ENCODE measurements at regions of chr10 and their contacts with region 1.

Region 1: DNA sequence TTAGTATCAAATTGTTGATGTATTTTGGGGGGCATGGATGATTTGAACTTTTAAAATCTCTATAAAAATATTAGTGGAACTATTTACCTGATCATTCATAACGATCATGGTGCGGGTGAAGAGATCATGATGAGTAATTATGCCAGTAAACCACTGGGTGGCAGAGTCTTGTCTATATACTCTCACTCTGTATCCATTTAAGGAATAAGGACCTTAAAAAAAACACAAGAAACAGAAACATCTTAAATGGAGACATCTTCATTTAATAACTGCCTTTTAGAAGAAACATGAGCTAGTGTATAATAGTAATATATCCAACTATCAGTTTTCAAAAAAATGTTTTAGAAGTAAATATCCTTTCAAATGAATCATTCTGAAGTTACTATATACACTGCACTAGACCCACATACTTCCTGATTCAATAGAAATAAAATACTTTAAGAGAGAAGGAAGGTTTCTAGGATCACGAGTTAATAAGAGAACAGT is 84.0 kb downstream of the NRBF2 start:
- DNase-seq: no peak
- ATAC-seq: peak; percentile 78 to 84

Region 2: DNA sequence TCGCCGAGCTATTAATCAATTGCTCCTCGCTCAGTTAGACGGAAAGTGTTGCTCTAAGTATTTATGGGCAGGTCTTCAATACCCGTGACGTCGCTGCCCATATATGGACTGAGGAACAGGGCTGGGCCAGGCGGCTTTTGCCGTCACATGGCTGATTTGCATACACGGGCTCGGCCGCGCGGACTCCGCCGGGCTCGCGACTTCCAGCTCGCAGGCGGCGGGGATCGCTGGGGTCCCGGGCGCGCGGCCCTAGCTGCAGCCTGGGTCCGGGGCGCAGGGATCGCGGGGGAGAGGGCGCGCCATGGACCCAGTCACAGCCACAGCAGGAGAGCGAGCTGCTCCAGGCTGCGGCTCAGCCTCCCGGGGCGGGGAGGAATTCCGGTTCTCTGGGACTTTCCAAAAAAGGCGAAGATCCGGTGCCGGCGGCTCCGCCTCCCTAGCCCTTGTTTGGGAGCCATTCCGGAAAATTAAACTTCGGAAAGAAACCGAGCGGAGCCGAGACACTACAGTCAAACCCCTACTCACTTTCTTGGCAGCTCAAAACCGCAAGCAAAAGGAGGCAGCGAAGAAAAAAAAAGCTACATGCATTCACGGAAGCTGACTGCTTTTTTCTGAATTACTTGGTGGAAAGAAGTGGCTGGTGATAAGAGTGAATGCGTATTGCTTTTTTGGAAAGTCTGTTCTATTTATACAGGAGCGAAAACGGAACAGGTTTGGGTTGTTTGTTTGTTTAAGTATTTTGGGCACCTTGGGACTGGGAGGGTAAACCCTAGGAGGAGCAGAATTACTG is 400.6 kb before region 1 on chr10 and contains the start of gene EGR2:
- intact Hi-C with region 1: no loop called
- DNase-seq: peak; percentile 95
- ATAC-seq: peak; percentile 87 to 88
- total RNA-seq, gene EGR2: 2.3 to 4.4 TPM

Region 3: DNA sequence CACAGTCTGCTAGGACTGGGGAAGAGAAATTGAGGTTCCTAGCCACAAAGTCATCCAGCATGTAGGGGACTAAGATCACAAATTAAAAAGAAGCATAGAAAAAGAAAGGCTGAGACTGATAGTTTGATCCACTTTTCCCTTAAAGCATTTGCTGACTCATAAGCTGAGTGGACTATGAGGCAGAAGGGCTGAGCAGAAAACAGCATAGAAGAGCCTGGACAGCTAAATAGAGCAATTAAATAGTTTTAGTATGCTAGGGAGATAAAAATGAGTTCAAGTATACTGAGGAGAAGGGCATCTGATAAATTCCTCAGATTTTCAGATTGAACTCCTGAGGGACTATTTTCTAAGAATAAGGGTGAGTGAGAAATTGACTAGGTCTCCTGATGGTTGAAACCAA is 245.1 kb before region 1 on chr10:
- intact Hi-C with region 1: no loop called
- DNase-seq: no peak
- ATAC-seq: no peak

Region 4: DNA sequence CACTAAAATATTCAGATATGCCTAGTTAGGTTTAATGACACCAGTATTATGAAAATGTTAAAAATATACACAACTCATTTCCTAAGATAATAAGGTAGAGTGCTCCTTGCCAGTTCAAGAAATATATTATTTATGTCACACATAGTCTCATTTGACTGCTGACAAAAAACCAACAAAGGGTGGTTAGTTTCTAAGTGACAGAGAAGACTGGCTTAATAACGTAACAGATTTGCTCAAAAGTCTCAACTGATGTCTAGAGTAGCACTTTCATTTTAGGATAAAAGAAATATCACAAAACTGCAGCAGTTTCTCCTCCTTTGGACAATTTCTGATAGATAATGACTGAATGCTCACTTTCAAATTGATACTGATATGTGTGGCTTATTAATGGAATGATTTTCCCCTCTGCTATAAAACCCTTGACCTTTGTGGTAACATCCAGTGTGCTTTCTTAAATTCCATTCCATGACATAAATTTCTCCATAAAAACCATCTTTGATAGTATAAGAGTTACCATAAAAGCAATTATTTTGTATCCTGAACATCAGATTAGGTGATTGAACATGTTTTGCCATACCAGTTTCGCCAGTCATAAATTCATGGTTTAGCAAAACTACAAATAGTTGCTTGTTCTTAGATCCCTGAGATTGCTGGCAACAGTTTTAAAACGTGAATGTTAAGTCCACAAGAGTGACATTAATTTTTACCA is 10.2 kb after region 1 on chr10:
- intact Hi-C with region 1: no loop called
- DNase-seq: no peak
- ATAC-seq: no peak

Region 5: GRCh38 chr10:63256009-63256773 is 39.0 kb after region 1 on chr10:
- intact Hi-C with region 1: loop called in 1 of 2 experiments (anchors 5 kb)
- DNase-seq: no peak
- ATAC-seq: peak; percentile 77 to 85

Region 6: GRCh38 chr10:63720072-63720537 is 502.9 kb after region 1 on chr10:
- intact Hi-C with region 1: loop called in 1 of 2 experiments (anchors 5 kb)
- DNase-seq: no peak
- ATAC-seq: peak; percentile 28 to 51

Measured in left cardiac atrium (tissue), 4 donors.